MCF 10A (cell line): ENCODE measurements at regions of chr18 and their contacts with region 1.

Region 1: DNA sequence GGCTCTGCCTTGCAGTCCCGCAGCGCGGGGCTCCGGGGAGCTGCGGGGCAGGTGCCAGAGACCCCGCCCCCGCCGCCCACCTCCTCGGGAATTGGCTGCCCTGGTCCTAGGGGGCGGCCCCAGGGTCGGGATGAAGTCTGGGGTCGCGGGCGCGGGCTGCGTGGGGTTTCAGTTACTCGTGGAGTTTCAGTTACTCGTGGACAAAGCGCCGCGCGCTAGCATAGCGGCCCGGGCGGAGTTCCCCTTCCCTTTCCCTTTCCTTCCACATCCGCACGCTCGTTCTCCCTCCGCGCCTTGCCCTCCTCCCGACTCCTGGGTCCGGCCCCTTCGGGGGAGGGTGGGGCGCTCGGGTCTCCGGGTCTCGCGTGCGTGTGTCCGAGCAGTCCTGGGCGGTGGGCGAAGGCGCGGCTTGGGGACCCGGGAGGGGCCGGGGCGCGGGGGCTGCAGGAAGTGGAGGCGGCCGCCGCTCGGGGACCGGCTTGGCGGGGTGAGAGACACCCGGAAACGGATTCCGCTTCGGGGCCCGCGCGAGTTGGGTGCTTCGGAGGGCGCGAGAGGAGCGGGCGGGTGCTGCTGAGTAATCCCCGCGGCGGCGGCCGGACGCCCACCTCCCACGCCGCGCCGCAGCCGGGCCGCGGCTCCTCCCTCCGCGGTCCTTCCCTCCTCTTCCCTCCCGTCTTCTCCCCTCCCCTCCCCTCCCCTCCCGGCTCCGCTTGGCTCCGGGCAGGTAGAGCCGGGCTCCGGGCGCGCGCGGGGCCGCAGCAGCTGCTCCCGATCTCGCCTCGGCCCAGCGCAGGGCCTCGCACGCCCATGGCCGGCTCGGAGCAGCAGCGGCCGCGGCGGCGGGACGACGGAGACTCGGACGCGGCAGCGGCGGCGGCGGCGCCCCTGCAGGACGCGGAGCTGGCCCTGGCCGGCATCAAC is at the start of gene TTC39C:
- DNase-seq: peak; percentile 70
- H3K4me3 Mint-ChIP-seq: peak within 1 kb of the TSS; percentile 93
- H3K27ac Mint-ChIP-seq: no peak within 1 kb of the TSS
- H3K4me1 Mint-ChIP-seq: peaks cover 23% of the 10 kb centered on the region
- H3K27me3 Mint-ChIP-seq: peaks cover 7% of the 10 kb centered on the region
- CTCF ChIP-seq: no peak
- total RNA-seq, gene TTC39C: 11.4 and 12.9 TPM in 2 replicates

Region 2: DNA sequence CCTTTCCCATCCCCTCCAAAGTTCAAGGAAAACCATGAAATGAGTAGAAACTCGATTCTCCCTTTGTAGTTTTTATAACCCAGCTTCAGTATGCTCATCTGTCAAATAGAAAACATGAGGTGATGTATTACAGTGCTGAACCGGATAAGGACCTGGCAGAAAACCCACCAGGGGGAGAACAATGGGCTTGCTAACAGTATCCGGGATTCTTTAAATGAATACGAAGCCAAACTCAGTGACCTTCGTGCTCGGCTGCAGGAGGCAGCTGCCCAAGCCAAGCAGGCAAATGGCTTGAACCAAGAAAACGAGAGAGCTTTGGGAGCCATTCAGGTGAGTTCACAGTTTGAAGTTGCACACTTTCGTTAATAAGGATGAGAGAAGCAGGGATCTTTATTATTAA is 113.3 kb before region 1 on chr18:
- CTCF ChIA-PET with region 1: no interaction called
- POLR2A ChIA-PET with region 1: no interaction called
- intact Hi-C with region 1: no loop called
- DNase-seq: no peak
- H3K4me3 Mint-ChIP-seq: no peak overlapping the region
- H3K27ac Mint-ChIP-seq: no peak overlapping the region
- H3K4me1 Mint-ChIP-seq: no peaks in the 10 kb centered on the region
- H3K27me3 Mint-ChIP-seq: no peaks in the 10 kb centered on the region
- CTCF ChIP-seq: no peak

Region 3: DNA sequence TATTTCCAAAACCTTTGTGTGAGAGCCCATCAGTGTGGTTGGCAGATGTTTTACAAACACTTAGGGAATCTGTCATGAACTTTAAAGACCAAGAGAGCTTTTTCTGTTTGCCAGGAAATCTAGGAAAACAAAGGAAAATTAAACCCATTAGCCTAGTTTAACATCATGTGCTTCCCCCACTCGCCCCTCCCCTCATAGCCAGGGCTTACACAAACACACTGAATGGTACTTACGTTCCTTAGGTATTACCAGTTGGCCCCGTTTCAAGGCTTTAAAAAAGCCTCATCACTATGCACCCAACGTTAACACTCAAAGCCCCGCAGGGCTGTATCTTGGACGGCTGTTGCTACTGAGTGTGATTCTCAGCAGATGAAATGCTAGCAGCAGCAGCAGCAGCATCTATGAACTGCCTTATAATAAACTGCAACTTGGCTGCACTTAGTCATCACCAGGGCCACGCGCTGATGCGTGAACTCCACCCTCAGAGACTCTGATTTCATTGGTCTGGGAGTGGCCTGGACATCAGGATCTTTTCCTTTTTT is 19.9 kb before region 1 on chr18:
- CTCF ChIA-PET with region 1: interaction called, 5 read pairs
- POLR2A ChIA-PET with region 1: interaction called, 42 read pairs
- intact Hi-C with region 1: loop called (anchors 1 kb)
- DNase-seq: peak; percentile 98
- H3K4me3 Mint-ChIP-seq: peak overlapping the region; percentile 46
- H3K27ac Mint-ChIP-seq: no peak overlapping the region
- H3K4me1 Mint-ChIP-seq: peaks cover 44% of the 10 kb centered on the region
- H3K27me3 Mint-ChIP-seq: no peaks in the 10 kb centered on the region
- CTCF ChIP-seq: no peak

Region 4: GRCh38 chr18:24027156-24027827 is 13.0 kb after region 1 on chr18:
- CTCF ChIA-PET with region 1: interaction called, 5 read pairs
- POLR2A ChIA-PET with region 1: interaction called, 65 read pairs
- intact Hi-C with region 1: no loop called
- DNase-seq: peak; percentile 95
- H3K4me3 Mint-ChIP-seq: peak overlapping the region; percentile 57
- H3K27ac Mint-ChIP-seq: peak overlapping the region; percentile 74
- H3K4me1 Mint-ChIP-seq: peaks cover 31% of the 10 kb centered on the region
- H3K27me3 Mint-ChIP-seq: no peaks in the 10 kb centered on the region
- CTCF ChIP-seq: no peak

Region 5: GRCh38 chr18:24075731-24076130 is 61.4 kb after region 1 on chr18:
- CTCF ChIA-PET with region 1: interaction called, 15 read pairs
- POLR2A ChIA-PET with region 1: interaction called, 16 read pairs
- intact Hi-C with region 1: loop called (anchors 1 kb)
- DNase-seq: peak; percentile 16
- H3K4me3 Mint-ChIP-seq: peak overlapping the region; percentile 24
- H3K27ac Mint-ChIP-seq: peak overlapping the region; percentile 86
- H3K4me1 Mint-ChIP-seq: peaks cover 19% of the 10 kb centered on the region
- H3K27me3 Mint-ChIP-seq: no peaks in the 10 kb centered on the region
- CTCF ChIP-seq: no peak

Region 6: GRCh38 chr18:24118750-24119577 is 104.6 kb after region 1 on chr18:
- CTCF ChIA-PET with region 1: interaction called, 4 read pairs
- POLR2A ChIA-PET with region 1: interaction called, 3 read pairs
- intact Hi-C with region 1: loop called (anchors 5 kb)
- DNase-seq: peak; percentile 86
- H3K4me3 Mint-ChIP-seq: no peak overlapping the region
- H3K27ac Mint-ChIP-seq: no peak overlapping the region
- H3K4me1 Mint-ChIP-seq: peaks cover under 1% of the 10 kb centered on the region
- H3K27me3 Mint-ChIP-seq: no peaks in the 10 kb centered on the region
- CTCF ChIP-seq: peak; percentile 75